Esophagus muscularis mucosa (tissue), 4 donors: ENCODE measurements at regions of chr14 and their contacts with region 1.

Region 1: DNA sequence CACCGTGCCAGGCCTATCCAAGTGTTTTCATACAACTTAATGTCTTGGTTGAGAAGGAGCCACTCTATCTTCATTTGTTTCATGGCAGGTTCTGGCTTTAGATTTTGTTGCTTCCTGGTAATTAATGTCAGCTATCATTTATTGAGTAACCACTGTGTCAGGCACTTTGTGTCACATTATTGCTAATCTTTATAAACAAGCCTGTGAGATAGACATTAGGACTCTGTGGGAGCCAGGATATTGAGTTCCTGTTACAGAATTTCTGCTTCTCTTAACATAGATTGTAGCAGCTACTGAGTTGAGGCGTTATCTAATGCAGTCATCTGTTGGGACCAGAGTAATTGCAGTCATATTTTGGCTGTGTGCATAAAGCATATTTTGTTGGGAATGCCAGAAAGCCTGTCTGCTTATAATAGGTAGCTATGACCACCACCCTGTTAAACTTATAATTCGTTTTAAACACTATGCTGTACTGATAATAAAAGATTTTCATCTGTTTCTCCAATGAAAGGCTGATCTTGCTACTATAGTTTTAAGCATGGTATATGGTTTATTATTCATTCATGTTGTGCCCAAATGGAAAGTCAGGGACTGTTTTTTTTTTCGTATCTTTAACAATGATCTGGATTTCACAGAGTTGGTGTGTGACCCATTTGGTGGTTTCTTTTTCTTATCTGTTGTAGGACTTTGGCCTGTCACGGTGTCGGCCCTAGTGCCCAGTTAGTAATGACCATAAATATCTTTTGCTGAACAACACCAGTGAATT is 432.6 kb downstream of the PCNX1 start:
- DNase-seq: no peak
- H3K4me3 ChIP-seq: no peak overlapping the region
- H3K27ac ChIP-seq: no peak overlapping the region
- H3K4me1 ChIP-seq: peaks cover 0 to 41% (median 35%) of the 10 kb centered on the region in 4 donors
- H3K27me3 ChIP-seq: no peaks in the 10 kb centered on the region
- CTCF ChIP-seq: no peak
- EP300 ChIP-seq: no peak
- POLR2A ChIP-seq: no peak

Region 2: DNA sequence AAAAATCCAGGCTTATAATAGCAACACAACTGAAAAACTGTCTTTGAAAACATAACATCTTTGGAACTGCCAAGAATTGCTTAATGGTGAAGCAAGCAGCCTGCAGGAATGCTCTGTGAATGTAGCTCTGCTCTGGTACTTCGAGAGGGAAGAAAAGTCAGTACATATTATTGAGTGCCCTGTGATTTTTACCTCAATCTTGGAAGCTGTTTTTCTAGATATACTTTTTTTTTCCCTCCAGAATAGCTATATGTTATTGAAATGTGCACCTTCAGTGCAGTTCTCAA is 75.5 kb after region 1 on chr14:
- intact Hi-C with region 1: loop called (anchors 10 kb)
- DNase-seq: no peak
- H3K4me3 ChIP-seq: no peak overlapping the region
- H3K27ac ChIP-seq: no peak overlapping the region
- H3K4me1 ChIP-seq: peaks cover 0 to 36% (median 29%) of the 10 kb centered on the region in 4 donors
- H3K27me3 ChIP-seq: no peaks in the 10 kb centered on the region
- CTCF ChIP-seq: no peak
- EP300 ChIP-seq: no peak
- POLR2A ChIP-seq: no peak

Region 3: DNA sequence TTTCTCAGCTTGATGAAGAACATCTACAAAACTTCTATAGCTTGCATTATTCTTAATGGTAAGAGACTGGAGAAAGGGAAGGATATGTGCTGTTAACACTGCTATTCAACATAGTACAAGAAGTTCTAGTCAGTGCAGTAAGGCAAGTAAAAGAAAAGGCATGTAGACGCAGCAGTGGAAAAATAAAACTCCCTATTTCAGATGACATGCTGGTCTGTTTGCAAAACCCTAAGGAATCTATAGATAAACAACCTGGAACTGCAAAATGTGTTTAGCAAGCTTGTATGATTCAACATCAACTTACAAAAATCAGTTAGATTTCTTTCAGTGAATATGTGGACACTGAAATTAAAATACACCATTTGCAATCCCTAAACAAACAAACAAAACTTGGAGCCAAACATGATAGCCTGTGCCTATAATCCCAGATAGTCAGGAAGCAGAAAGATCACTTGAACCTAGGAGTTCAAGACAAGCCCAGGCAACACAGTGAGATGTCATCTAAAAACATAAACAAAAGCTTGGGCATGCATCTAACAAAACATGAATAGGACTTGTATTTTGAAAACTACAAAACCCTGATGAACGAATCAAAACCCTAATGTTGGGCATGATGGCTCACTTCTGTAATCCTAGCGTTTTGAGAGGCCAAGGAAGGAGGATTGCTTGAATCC is 298.8 kb after region 1 on chr14:
- intact Hi-C with region 1: no loop called
- DNase-seq: no peak
- H3K4me3 ChIP-seq: no peak overlapping the region
- H3K27ac ChIP-seq: no peak overlapping the region
- H3K4me1 ChIP-seq: no peaks in the 10 kb centered on the region
- H3K27me3 ChIP-seq: no peaks in the 10 kb centered on the region
- CTCF ChIP-seq: no peak
- EP300 ChIP-seq: no peak
- POLR2A ChIP-seq: no peak